GM12878 (cell line): ENCODE measurements at regions of chr5 and their contacts with region 1.

Region 1: DNA sequence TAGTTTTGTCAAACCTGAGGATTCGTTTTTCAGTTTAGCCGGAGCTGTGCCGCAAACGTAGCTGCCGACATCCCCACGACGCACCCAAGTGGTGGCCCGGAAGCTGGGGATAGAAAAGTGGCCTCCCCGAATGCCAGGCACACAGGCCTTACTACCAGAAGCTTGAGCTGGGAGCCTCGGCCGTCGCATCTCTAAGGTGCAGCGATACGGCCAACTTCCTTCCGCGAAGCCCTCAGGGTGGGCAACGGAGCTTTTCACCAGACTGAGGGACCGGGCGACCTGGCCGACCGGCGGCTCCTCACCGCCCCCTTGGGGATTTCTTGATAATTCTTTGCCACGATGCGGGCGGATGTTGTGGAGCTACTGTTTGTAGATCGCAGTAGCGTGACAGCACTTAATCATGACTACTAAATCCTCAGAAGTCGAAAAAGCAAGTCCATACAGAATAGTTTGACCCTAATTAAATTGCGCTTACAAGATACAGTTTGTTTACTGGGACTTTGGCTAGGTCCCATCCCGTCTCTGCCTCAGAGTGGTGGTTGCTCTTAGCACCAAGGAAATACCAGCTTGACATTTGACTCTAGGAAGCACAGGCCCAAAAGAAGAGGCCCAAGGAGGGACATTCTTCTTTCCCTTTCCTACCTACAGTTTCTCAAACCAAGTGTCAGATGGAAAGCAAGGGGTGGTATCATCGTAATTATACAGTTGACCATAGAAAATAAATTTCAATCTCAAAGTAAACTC is 613 bp upstream of the TMEM267 start:
- DNase-seq: peak; percentile 60
- ATAC-seq: peak; percentile 82
- H3K4me3 ChIP-seq: peak overlapping the region; percentile 80
- H3K27ac ChIP-seq: peak overlapping the region; percentile 100
- H3K4me1 ChIP-seq: peaks cover 3% of the 10 kb centered on the region
- H3K27me3 ChIP-seq: no peaks in the 10 kb centered on the region
- CTCF ChIP-seq: peak; percentile 56 to 82 (median 69)
- EP300 ChIP-seq: 0 out of 4 replicates have a peak, but pooled peaks of 1 of the 2 experiments have one; percentile 7
- POLR2A ChIP-seq: peak; percentile 61
- RAD21 ChIP-seq: peak; percentile 58

Region 2: DNA sequence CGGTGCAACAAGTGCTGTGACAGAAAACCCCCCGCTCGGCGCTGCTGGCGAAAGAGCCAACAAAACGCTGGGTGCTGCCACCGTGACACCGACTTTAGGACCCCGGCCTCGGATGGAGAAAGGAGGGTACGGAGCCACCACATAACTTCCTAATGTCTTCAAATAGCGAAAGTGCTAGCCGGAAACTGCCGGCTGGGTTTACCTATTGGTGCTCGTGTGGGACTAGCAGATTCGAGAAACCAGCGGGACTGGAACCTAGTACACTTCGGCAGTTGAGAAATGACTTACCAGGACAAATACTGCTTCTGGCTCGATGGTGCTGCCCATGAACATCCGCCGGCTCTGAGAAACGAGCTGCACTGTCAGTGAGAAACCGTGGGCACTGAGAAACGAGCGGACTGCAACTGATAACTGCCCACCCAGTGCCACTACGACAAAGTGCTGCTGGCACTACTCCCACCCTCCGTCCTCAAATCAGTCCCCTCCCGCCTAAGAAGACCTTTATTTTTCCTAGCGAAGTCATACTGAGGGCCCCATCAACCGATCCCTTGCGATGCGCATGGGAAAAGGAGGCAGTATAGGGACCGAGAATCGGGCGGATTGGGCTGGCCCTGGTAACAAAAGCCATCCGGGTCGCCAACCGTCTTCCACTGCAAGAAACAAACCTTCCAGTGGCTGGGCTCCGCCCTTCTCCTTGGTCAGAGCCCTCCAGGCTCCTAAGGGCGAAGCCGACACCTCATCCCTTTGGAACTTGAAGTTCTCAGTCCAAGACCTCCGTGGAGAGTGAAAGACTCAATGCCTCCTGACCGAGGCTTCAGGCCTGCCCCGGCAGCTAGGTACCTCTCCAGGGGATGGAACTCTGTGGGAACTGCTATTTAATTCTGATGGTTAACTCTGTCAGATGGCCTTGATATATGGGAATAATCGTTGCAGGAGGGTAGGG is 417.2 kb before region 1 on chr5:
- CTCF ChIA-PET with region 1: interaction called, 3 read pairs
- POLR2A ChIA-PET with region 1: interaction called, 3 read pairs
- RAD21 ChIA-PET with region 1: interaction called, 3 read pairs
- SMC1A ChIA-PET with region 1: interaction called, 3 read pairs
- in situ Hi-C with region 1: no loop called
- intact Hi-C with region 1: loop called (anchors 5 kb)
- DNase-seq: peak; percentile 74
- ATAC-seq: peak; percentile 58
- H3K4me3 ChIP-seq: peak overlapping the region; percentile 91
- H3K27ac ChIP-seq: peak overlapping the region; percentile 100
- H3K4me1 ChIP-seq: peaks cover 10% of the 10 kb centered on the region
- H3K27me3 ChIP-seq: no peaks in the 10 kb centered on the region
- CTCF ChIP-seq: no peak
- EP300 ChIP-seq: peak in 1 of 2 experiments; percentile 100; a peak in 2 of 4 replicates
- POLR2A ChIP-seq: peak; percentile 47; the same call in 1 of the 2 replicates
- RAD21 ChIP-seq: no peak

Region 3: DNA sequence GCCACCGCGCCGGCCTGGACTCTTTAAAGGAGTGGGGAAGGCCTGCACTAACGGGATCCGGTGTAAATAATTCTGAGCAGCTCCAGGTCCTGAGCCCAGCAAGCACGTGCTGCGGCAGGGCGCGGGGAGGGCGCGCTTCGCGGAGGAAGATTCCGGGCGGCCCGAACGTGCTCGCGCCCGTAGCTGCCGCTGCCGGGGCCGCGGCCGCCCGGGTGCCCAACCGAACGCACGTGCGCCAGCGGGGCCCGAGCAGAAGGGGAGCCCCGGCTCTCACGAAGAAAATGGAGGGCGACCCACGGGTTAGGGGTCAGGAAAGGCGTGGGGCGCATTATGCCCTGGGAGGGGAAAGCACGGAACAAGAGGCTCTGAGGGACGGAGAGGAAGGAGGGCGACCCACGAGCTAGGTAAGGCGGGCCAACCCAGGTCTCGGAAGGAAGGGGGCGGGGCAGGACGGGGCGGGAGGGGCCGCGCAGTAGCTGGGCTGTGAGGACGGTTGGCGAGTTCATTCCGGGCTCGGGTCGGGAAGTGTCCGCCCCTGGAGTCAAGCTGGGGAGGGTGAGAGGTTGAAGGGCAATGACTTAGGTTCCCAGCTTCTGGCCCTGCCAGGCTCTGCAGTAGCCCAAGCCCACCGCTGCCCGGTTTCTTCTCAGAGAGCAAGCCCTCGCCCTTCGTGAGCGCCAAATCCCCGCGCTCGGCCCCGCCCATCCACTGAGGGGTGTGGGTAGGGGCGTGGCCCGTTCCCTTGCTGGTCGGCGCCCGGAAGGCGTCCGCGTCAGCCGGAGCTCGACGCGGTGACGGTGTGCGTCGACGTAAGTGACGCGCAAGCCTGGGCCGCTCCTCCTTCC is 363.3 kb before region 1 on chr5 and contains the start of gene ZNF131:
- CTCF ChIA-PET with region 1: interaction called, 7 read pairs
- POLR2A ChIA-PET with region 1: interaction called, 14 read pairs
- RAD21 ChIA-PET with region 1: interaction called, 16 read pairs
- SMC1A ChIA-PET with region 1: no interaction called
- in situ Hi-C with region 1: no loop called
- intact Hi-C with region 1: loop called (anchors 5 kb)
- DNase-seq: peak; percentile 87
- ATAC-seq: peak; percentile 93
- H3K4me3 ChIP-seq: peak within 1 kb of the TSS; percentile 96
- H3K27ac ChIP-seq: peak within 1 kb of the TSS; percentile 94
- H3K4me1 ChIP-seq: peaks cover 10% of the 10 kb centered on the region
- H3K27me3 ChIP-seq: peaks cover 0 to 1% of the 10 kb centered on the region in 2 experiments; a peak in 1 of 4 replicates
- CTCF ChIP-seq: no peak
- EP300 ChIP-seq: peak in 1 of 2 experiments; percentile 25; a peak in 1 of 4 replicates
- POLR2A ChIP-seq: peak; percentile 87
- RAD21 ChIP-seq: no peak
- polyA plus RNA-seq, gene ZNF131: 16.4 to 23.3 TPM

Region 4: DNA sequence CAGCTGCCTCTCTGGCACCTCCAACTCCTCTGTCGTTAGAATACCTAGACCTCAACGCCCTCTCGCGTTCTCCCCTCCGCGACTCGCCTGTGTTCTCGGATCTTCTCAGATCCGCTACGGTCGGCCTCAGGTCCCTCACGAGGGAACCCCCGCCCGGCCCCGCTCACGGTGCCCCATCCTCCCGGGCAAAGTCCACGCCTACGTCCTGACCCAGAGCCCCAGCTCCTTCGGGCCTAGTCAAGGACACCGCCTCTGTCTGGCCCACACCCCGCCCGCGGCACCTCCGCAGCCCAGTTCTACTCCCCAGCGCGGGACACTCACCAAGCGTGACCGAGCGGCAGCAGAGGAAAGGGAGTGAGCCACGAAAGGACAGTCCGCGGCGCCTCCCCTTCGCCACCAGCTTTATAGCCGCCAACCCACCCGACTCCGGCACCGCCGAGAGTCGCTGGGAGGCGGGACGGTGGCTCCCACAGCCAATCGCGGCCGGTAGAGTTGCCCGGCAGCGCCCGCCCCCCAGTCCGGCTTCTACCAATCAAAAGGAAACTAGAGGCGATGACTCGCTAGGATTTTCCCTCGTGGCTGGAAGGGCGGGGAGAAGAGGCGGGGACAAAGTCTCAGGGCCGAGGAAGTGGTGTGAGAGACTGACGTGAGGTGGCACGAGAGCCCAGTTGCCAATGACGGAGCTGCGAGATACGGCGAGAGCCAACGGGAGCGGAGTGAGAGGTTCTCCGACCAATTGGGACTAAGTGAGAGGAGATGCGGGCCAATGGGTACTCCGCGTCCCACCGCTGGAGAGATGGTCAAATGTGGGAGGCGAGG is 171.0 kb before region 1 on chr5 and contains the start of gene HMGCS1:
- CTCF ChIA-PET with region 1: interaction called, 20 read pairs
- POLR2A ChIA-PET with region 1: interaction called, 17 read pairs
- RAD21 ChIA-PET with region 1: interaction called, 26 read pairs
- SMC1A ChIA-PET with region 1: interaction called, 20 read pairs
- in situ Hi-C with region 1: no loop called
- intact Hi-C with region 1: loop called (anchors 5 kb)
- DNase-seq: peak; percentile 100
- ATAC-seq: peak; percentile 92
- H3K4me3 ChIP-seq: peak within 1 kb of the TSS; percentile 79
- H3K27ac ChIP-seq: peak within 1 kb of the TSS; percentile 84
- H3K4me1 ChIP-seq: peaks cover 6% of the 10 kb centered on the region
- H3K27me3 ChIP-seq: no peaks in the 10 kb centered on the region
- CTCF ChIP-seq: peak in 2 of 3 experiments; percentile 6 to 16; a peak in 1 of 6 replicates
- EP300 ChIP-seq: peak in 1 of 2 experiments; percentile 60; a peak in 1 of 4 replicates
- POLR2A ChIP-seq: peak; percentile 99
- RAD21 ChIP-seq: peak; percentile 23; the same call in 1 of the 2 replicates
- polyA plus RNA-seq, gene HMGCS1: 74.9 to 94.1 TPM

Region 5: GRCh38 chr5:43367909-43368648 is 116.2 kb before region 1 on chr5:
- CTCF ChIA-PET with region 1: no interaction called
- POLR2A ChIA-PET with region 1: no interaction called
- RAD21 ChIA-PET with region 1: no interaction called
- SMC1A ChIA-PET with region 1: no interaction called
- in situ Hi-C with region 1: no loop called
- intact Hi-C with region 1: no loop called
- DNase-seq: no peak
- ATAC-seq: no peak
- H3K4me3 ChIP-seq: no peak overlapping the region
- H3K27ac ChIP-seq: no peak overlapping the region
- H3K4me1 ChIP-seq: no peaks in the 10 kb centered on the region
- H3K27me3 ChIP-seq: no peaks in the 10 kb centered on the region
- CTCF ChIP-seq: no peak
- EP300 ChIP-seq: no peak
- POLR2A ChIP-seq: no peak
- RAD21 ChIP-seq: no peak

Region 6: GRCh38 chr5:43461066-43461465 is 23.2 kb before region 1 on chr5:
- CTCF ChIA-PET with region 1: no interaction called
- POLR2A ChIA-PET with region 1: no interaction called
- RAD21 ChIA-PET with region 1: no interaction called
- SMC1A ChIA-PET with region 1: no interaction called
- in situ Hi-C with region 1: no loop called
- intact Hi-C with region 1: no loop called
- DNase-seq: no peak
- ATAC-seq: no peak
- H3K4me3 ChIP-seq: no peak overlapping the region
- H3K27ac ChIP-seq: no peak overlapping the region
- H3K4me1 ChIP-seq: no peaks in the 10 kb centered on the region
- H3K27me3 ChIP-seq: no peaks in the 10 kb centered on the region
- CTCF ChIP-seq: no peak
- EP300 ChIP-seq: no peak
- POLR2A ChIP-seq: no peak
- RAD21 ChIP-seq: no peak

Region 7: GRCh38 chr5:43497311-43498104 is 13.2 kb after region 1 on chr5:
- CTCF ChIA-PET with region 1: interaction called, 7 read pairs
- POLR2A ChIA-PET with region 1: interaction called, 16 read pairs
- RAD21 ChIA-PET with region 1: interaction called, 16 read pairs
- SMC1A ChIA-PET with region 1: interaction called, 20 read pairs
- in situ Hi-C with region 1: no loop called
- intact Hi-C with region 1: no loop called
- DNase-seq: no peak
- ATAC-seq: peak; percentile 89
- H3K4me3 ChIP-seq: no peak overlapping the region
- H3K27ac ChIP-seq: no peak overlapping the region
- H3K4me1 ChIP-seq: no peaks in the 10 kb centered on the region
- H3K27me3 ChIP-seq: no peaks in the 10 kb centered on the region
- CTCF ChIP-seq: no peak
- EP300 ChIP-seq: no peak
- POLR2A ChIP-seq: no peak
- RAD21 ChIP-seq: no peak

Region 8: DNA sequence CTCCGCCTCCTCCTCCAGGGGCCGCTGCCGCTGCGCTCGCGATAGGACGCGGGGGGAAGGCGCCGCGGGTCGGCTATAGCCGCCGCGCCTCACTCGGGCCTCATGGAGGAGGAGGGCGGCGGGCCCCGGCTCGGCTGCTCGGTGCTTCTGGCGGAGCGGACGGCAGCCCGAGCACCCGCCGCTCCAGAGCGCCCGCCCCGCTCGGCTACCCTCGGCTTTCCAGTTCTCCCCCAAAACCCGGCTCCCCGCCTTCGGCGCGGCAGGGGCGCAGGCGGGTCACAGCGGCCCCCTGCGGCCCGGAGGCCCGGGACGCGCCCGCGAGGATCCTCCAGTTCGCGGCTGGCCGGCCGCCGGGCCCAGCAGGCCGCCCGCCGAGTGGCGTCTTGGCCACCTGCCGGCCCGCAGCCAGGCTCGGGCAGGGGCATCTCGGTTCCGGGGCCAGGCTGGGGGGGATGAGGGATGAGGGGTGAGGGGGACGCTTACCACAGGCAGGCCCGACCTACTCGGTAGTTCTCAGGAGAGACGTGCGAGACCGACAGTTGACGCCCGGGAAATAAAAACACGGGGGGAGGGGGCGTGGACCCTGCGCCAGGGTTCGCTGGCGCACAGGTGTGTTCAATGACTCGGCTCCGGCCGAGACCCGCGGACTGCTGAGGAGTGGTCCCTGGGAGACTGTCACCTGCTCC is 72.7 kb after region 1 on chr5 and contains the start of gene PAIP1:
- CTCF ChIA-PET with region 1: interaction called, 18 read pairs
- POLR2A ChIA-PET with region 1: interaction called, 18 read pairs
- RAD21 ChIA-PET with region 1: interaction called, 19 read pairs
- SMC1A ChIA-PET with region 1: interaction called, 4 read pairs
- in situ Hi-C with region 1: no loop called
- intact Hi-C with region 1: loop called (anchors 1 kb)
- DNase-seq: peak; percentile 37
- ATAC-seq: peak; percentile 84
- H3K4me3 ChIP-seq: peak within 1 kb of the TSS; percentile 94
- H3K27ac ChIP-seq: peak within 1 kb of the TSS; percentile 87
- H3K4me1 ChIP-seq: peaks cover 13% of the 10 kb centered on the region
- H3K27me3 ChIP-seq: no peaks in the 10 kb centered on the region
- CTCF ChIP-seq: peak in 2 of 3 experiments; percentile 56 to 61; a peak in 5 of 6 replicates
- EP300 ChIP-seq: no peak
- POLR2A ChIP-seq: peak; percentile 86
- RAD21 ChIP-seq: no peak; the same call in 1 of the 2 replicates
- polyA plus RNA-seq, gene PAIP1: 37.4 to 52.7 TPM

Region 9: GRCh38 chr5:43609752-43610151 is 125.5 kb after region 1 on chr5:
- CTCF ChIA-PET with region 1: interaction called, 11 read pairs
- POLR2A ChIA-PET with region 1: interaction called, 4 read pairs
- RAD21 ChIA-PET with region 1: interaction called, 5 read pairs
- SMC1A ChIA-PET with region 1: interaction called, 9 read pairs
- in situ Hi-C with region 1: no loop called
- intact Hi-C with region 1: loop called (anchors 10 kb)
- DNase-seq: no peak
- ATAC-seq: peak; percentile 96
- H3K4me3 ChIP-seq: no peak overlapping the region
- H3K27ac ChIP-seq: no peak overlapping the region
- H3K4me1 ChIP-seq: no peaks in the 10 kb centered on the region
- H3K27me3 ChIP-seq: no peaks in the 10 kb centered on the region
- CTCF ChIP-seq: peak; percentile 42 to 59 (median 54); a peak in 5 of 6 replicates
- EP300 ChIP-seq: no peak
- POLR2A ChIP-seq: no peak
- RAD21 ChIP-seq: peak; percentile 56

Region 10: DNA sequence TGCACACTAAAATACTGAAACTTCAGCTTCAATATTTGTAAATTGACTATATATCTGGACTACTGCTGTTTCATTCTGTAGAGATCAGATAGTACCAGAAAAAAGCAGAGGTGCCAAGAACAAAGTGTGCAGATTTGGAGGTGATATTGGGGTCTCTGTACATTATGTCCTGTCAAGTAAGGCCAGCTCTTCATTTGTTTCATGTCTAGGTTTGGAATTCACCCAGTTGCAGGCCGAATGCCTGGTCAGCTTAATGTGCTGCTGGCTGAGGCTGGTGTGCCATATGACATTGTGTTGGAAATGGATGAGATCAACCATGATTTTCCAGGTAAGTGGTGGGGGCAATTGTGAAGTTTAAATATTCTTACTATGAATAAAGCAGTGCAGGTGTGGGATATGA is 215.6 kb after region 1 on chr5:
- CTCF ChIA-PET with region 1: no interaction called
- POLR2A ChIA-PET with region 1: no interaction called
- RAD21 ChIA-PET with region 1: no interaction called
- SMC1A ChIA-PET with region 1: no interaction called
- in situ Hi-C with region 1: no loop called
- intact Hi-C with region 1: no loop called
- DNase-seq: no peak
- ATAC-seq: no peak
- H3K4me3 ChIP-seq: no peak overlapping the region
- H3K27ac ChIP-seq: no peak overlapping the region
- H3K4me1 ChIP-seq: no peaks in the 10 kb centered on the region
- H3K27me3 ChIP-seq: no peaks in the 10 kb centered on the region
- CTCF ChIP-seq: no peak
- EP300 ChIP-seq: no peak
- POLR2A ChIP-seq: no peak
- RAD21 ChIP-seq: no peak